CD14-positive monocyte (primary cell): ENCODE measurements at regions of chr11 and their contacts with region 1.

Region 1: DNA sequence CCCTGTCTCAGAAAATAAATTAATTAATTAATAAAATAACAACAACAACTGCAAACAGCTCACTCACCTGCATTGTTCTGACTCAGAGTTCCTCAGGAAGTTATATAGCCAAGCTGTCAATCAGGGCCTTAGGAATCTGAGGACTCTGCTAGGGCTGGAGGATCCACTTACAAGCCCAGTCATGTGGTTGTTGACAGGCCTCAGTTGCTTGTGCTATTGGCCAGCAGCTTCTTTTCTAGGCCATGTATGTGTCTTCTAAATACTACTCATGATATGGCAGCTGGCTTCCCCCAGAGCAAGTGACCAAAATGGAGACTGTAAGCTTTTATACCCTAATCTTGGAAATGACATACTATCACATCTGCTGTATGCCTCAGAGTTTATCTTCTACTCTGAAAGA is 20.8 kb upstream of the ATP5MG start:
- DNase-seq: no peak
- H3K4me3 ChIP-seq: no peak overlapping the region
- H3K4me3 Mint-ChIP-seq: no peak overlapping the region
- H3K27ac ChIP-seq: no peak overlapping the region
- H3K27ac Mint-ChIP-seq: no peak overlapping the region
- H3K4me1 ChIP-seq: no peaks in the 10 kb centered on the region
- H3K4me1 Mint-ChIP-seq: no peaks in the 10 kb centered on the region
- H3K27me3 ChIP-seq: no peaks in the 10 kb centered on the region
- H3K27me3 Mint-ChIP-seq: peaks cover 0 to 2% (median 0%) of the 10 kb centered on the region in 3 donors
- CTCF ChIP-seq: no peak

Region 2: DNA sequence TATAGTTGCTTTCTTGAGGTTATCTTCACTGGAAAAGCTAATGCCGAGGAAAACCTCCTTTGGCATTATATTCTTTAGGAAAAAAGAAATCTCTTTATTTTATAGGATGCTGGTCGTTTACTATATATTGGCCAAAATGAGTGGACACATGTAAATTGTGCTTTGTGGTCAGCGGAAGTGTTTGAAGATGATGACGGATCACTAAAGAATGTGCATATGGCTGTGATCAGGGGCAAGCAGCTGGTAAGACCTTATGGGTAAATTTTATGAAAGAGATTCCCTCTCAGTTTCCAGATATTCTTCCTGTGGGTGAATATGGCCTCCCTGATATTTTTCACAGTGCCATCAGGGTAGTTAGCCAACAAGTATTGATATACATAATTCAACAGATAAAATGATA is 117.3 kb after region 1 on chr11:
- intact Hi-C with region 1: loop called (anchors 5 kb)
- DNase-seq: no peak
- H3K4me3 ChIP-seq: no peak overlapping the region
- H3K4me3 Mint-ChIP-seq: no peak overlapping the region
- H3K27ac ChIP-seq: no peak overlapping the region
- H3K27ac Mint-ChIP-seq: no peak overlapping the region
- H3K4me1 ChIP-seq: no peaks in the 10 kb centered on the region
- H3K4me1 Mint-ChIP-seq: no peaks in the 10 kb centered on the region
- H3K27me3 ChIP-seq: no peaks in the 10 kb centered on the region
- H3K27me3 Mint-ChIP-seq: no peaks in the 10 kb centered on the region
- CTCF ChIP-seq: no peak